ENCODE measurements at regions of chr10 and their contacts with region 1.

Region 1: DNA sequence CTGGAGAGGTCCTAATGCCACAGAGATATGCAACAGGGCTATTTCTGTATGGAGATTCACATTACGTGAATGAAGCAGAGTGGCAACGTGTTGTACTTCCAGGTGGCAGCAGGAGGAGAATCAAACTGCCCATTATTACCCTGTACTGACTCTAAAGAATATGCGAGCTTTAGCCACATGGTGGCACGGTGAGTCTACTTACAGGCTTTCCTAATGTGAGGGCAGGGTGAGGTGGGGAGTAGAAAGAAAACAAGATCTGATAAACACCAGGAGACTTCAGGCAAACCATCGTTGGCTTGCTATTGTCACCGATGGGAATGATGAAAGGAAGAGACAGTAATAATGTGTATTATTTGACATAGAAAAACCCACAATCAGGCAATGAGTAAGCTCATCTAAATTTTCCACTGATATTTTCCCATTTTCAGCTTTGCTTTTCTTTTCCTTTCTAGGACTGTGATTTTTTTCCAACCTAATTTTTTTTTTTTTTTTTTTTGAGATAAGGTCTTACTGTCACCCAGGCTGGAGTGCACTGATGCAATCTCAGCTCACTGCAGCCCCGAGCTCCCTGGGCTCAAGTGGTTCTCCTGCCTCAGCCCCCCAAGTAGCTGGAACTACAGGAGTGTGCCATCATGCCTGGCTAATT is 164.3 kb downstream of the BTAF1 start:
- DNase-seq: peak; percentile 71
- H3K4me3 Mint-ChIP-seq: no peak overlapping the region
- H3K27ac Mint-ChIP-seq: no peak overlapping the region
- H3K4me1 Mint-ChIP-seq: no peaks in the 10 kb centered on the region
- H3K27me3 Mint-ChIP-seq: no peaks in the 10 kb centered on the region
- CTCF ChIP-seq: peak; percentile 48

Region 2: DNA sequence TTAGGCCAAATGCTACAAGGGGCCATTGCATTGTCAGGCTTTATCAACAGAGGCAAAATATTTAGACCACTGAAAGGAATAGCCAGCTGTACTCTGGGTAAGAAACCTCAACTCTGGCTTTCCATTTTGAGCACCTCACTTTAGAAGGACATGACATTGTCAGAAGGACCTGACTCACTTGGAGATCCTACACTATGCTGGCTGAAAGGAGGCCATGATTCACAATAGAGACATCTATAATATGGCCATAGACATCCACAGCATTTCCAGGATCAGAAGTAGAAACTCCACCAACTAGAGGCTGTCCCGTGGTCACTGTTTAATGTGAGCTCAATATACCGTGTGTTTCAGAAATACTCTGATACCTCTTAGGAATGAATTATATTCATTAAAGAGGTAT is 23.4 kb before region 1 on chr10:
- CTCF ChIA-PET with region 1: no interaction called
- intact Hi-C with region 1: no loop called
- DNase-seq: no peak
- H3K4me3 Mint-ChIP-seq: no peak overlapping the region
- H3K27ac Mint-ChIP-seq: no peak overlapping the region
- H3K4me1 Mint-ChIP-seq: no peaks in the 10 kb centered on the region
- H3K27me3 Mint-ChIP-seq: no peaks in the 10 kb centered on the region
- CTCF ChIP-seq: no peak

Region 3: DNA sequence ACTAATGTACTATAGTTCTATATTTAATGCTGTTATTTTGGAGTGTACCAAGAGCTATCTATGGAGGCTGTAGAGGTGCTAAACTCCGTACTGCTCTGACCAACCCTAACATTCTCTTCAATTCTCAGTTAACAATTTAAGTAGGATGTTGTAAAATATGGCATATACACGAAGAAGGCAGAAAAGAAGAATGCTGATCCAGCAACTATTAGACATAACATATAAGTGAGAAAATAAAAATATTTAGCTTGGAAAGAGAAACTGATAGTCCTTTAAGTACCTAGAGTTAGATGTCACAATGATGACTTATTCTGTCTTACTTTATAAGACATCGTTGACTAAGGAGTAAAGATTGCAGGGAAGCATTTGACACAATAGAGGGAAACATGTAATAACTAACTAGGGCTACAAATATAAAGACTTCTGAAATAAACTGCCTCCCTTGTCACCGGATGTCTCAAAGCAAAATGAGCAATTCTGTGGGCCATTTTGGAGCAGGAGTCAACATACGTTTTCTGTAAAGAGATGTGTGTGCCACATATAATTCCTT is 43.5 kb after region 1 on chr10:
- CTCF ChIA-PET with region 1: no interaction called
- intact Hi-C with region 1: no loop called
- DNase-seq: no peak
- H3K4me3 Mint-ChIP-seq: no peak overlapping the region
- H3K27ac Mint-ChIP-seq: no peak overlapping the region
- H3K4me1 Mint-ChIP-seq: peaks cover 41% of the 10 kb centered on the region
- H3K27me3 Mint-ChIP-seq: no peaks in the 10 kb centered on the region
- CTCF ChIP-seq: no peak

Region 4: GRCh38 chr10:92240289-92241157 is 152.7 kb after region 1 on chr10:
- CTCF ChIA-PET with region 1: interaction called, 4 read pairs
- intact Hi-C with region 1: loop called (anchors 5 kb)
- DNase-seq: peak; percentile 51
- H3K4me3 Mint-ChIP-seq: peak overlapping the region; percentile 78
- H3K27ac Mint-ChIP-seq: peak overlapping the region; percentile 71
- H3K4me1 Mint-ChIP-seq: peaks cover 41% of the 10 kb centered on the region
- H3K27me3 Mint-ChIP-seq: no peaks in the 10 kb centered on the region
- CTCF ChIP-seq: no peak

Region 5: GRCh38 chr10:92290837-92291615 is 203.2 kb after region 1 on chr10 and contains the starts of genes CPEB3 and MARCHF5:
- CTCF ChIA-PET with region 1: interaction called, 25 read pairs
- intact Hi-C with region 1: loop called (anchors 2 kb)
- DNase-seq: peak; percentile 92
- H3K4me3 Mint-ChIP-seq: peak within 1 kb of the TSS; percentile 77
- H3K27ac Mint-ChIP-seq: peak within 1 kb of the TSS; percentile 42
- H3K4me1 Mint-ChIP-seq: no peaks in the 10 kb centered on the region
- H3K27me3 Mint-ChIP-seq: no peaks in the 10 kb centered on the region
- CTCF ChIP-seq: peak; percentile 72
- total RNA-seq, gene CPEB3: 2.8 and 3.6 TPM in 2 replicates
- total RNA-seq, gene MARCHF5: 27.1 and 28.1 TPM in 2 replicates

Region 6: DNA sequence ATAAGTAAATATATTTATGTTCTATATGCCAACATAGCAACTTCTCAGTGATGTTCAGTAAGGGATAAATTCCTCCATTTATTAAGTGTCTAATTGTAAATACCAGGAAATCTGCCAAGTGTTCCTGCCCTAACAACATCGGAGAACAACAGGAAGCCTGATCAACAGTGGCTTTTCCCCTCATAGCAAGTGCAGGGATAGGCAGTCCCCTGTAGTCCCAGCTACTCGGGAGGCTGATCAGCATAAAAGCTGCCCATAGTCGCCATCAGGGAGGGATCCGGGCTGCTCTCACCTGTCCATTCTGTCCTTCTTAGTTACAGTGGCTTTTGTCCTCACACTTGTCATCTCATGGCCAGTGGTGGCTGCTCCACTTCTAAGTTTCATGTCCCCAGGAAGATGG is 344.7 kb after region 1 on chr10:
- CTCF ChIA-PET with region 1: interaction called, 9 read pairs
- intact Hi-C with region 1: loop called (anchors 1 kb)
- DNase-seq: no peak
- H3K4me3 Mint-ChIP-seq: no peak overlapping the region
- H3K27ac Mint-ChIP-seq: no peak overlapping the region
- H3K4me1 Mint-ChIP-seq: no peaks in the 10 kb centered on the region
- H3K27me3 Mint-ChIP-seq: no peaks in the 10 kb centered on the region
- CTCF ChIP-seq: no peak

Region 7: DNA sequence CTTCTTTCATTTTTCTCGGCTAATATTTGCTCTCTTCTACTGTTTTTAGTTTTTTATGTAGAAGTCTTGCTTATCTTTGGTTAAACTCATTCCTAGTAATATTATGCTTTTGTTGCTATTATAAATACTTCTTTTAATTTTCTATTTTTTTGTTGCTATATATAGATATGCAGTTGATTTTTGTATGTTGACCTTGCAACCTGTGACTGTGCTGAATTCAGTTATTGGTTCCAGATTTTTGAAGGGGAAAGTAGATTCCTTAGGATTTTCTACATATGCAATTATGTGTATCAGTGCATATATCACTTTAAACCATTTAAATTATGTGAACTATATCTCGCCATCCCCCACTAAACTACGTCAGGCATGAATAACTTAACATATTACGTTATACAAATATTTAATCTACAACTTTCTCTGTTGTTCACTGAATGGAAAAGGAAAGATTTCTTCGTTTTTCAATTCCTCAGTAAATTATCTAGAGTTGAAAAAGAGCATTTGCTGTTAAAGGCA is 414.5 kb after region 1 on chr10:
- CTCF ChIA-PET with region 1: interaction called, 14 read pairs
- intact Hi-C with region 1: no loop called
- DNase-seq: no peak
- H3K4me3 Mint-ChIP-seq: no peak overlapping the region
- H3K27ac Mint-ChIP-seq: no peak overlapping the region
- H3K4me1 Mint-ChIP-seq: no peaks in the 10 kb centered on the region
- H3K27me3 Mint-ChIP-seq: no peaks in the 10 kb centered on the region
- CTCF ChIP-seq: no peak